ENCODE measurements at regions of chrX and their contacts with region 1.

Region 1: DNA sequence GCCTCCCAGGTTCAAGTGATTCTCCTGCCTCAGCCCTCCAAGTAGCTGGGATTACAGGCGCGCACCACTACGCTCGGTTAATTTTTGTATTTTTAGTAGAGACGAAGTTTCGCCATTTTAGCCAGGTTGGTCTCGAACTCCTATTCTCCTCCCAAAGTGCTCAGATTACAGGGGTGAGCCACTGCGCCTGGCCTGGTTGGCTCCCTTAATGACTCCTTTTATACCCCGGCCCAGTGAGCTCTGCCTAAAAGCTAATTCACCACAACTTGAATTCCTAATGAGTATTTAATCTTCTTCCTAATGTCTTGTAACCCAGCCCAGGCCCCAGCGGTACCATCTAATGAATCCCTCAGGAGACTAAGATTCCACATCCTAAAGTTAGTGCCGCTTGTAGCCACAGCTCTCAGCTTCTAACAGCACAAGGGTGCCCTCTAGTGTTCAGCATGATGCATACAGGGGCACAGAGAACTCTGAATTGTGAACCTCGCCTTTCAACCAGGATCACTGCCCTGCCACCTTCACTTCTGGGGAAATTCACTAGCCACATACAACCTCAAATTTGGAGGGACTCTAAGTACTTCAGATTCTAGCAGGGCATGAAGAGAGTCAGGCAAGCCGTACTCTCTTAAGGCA is 89.5 kb downstream of the OR13H1 start:
- DNase-seq: no peak
- ATAC-seq: peak; percentile 57 to 79 (median 75)
- H3K4me3 ChIP-seq: no peak overlapping the region
- H3K27ac ChIP-seq: no peak overlapping the region
- H3K4me1 ChIP-seq: no peaks in the 10 kb centered on the region
- H3K27me3 ChIP-seq: peaks cover 0 to 40% (median 0%) of the 10 kb centered on the region in 3 donors
- CTCF ChIP-seq: peak; percentile 81

Region 2: DNA sequence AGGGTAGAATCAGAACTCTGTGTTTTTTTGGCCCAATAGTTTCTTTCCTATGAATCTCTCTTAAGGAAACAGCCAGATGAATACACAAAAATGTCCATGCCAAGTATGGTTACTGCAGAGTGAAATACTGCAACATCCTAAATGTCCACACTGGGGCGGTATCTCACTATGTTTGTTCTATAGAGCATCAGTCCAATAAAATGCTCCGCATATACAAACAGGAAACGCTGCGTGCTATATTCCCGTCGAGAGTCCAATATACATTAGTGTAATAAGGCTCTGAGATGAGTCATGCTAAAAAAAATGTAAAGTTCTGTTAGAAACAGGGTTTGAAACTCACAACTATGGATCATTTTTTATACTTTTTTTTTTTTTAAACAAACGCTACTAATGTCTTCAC is 657.5 kb before region 1 on chrX:
- intact Hi-C with region 1: loop called (anchors 2 to 5 kb)
- DNase-seq: no peak
- ATAC-seq: peak; percentile 74 to 83 (median 80)
- H3K4me3 ChIP-seq: no peak overlapping the region
- H3K27ac ChIP-seq: no peak overlapping the region
- H3K4me1 ChIP-seq: no peaks in the 10 kb centered on the region
- H3K27me3 ChIP-seq: no peaks in the 10 kb centered on the region
- CTCF ChIP-seq: peak; percentile 75

Region 3: GRCh38 chrX:131068945-131069719 is 564.3 kb before region 1 on chrX:
- intact Hi-C with region 1: loop called in 1 of 2 experiments (anchors 10 kb)
- DNase-seq: no peak
- ATAC-seq: peak; percentile 49 to 70 (median 66)
- H3K4me3 ChIP-seq: no peak overlapping the region
- H3K27ac ChIP-seq: no peak overlapping the region
- H3K4me1 ChIP-seq: no peaks in the 10 kb centered on the region
- H3K27me3 ChIP-seq: peaks cover 0 to 83% (median 12%) of the 10 kb centered on the region in 3 donors
- CTCF ChIP-seq: peak; percentile 49

Region 4: DNA sequence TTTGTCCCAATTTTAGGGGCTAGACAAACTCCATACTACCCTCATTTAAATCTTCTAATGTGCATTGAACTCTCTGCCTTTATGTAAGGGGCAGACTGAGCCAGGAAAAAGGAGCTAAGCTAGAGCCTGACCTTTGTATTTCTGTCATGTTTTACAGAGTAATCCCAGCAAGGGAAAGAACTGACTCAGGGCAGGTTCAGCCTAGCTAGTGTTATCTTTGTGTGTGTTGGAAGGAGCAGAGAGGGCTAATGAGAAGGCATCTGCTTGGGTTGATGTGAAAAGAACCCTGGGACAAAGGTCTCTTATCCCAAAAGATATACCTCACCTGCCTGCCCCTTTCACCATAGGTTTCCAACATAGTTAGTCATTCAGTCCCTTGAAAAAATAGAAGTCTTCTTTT is 376.0 kb before region 1 on chrX:
- intact Hi-C with region 1: loop called in 1 of 2 experiments (anchors 5 kb)
- DNase-seq: no peak
- ATAC-seq: no peak
- H3K4me3 ChIP-seq: no peak overlapping the region
- H3K27ac ChIP-seq: no peak overlapping the region
- H3K4me1 ChIP-seq: no peaks in the 10 kb centered on the region
- H3K27me3 ChIP-seq: peaks cover 0 to 18% (median 0%) of the 10 kb centered on the region in 3 donors
- CTCF ChIP-seq: no peak

Region 5: GRCh38 chrX:131366407-131366806 is 267.0 kb before region 1 on chrX:
- intact Hi-C with region 1: loop called in 1 of 2 experiments (anchors 10 kb)
- DNase-seq: no peak
- ATAC-seq: no peak
- H3K4me3 ChIP-seq: no peak overlapping the region
- H3K27ac ChIP-seq: no peak overlapping the region
- H3K4me1 ChIP-seq: no peaks in the 10 kb centered on the region
- H3K27me3 ChIP-seq: peaks cover 0 to 22% (median 0%) of the 10 kb centered on the region in 3 donors
- CTCF ChIP-seq: peak; percentile 34

Region 6: DNA sequence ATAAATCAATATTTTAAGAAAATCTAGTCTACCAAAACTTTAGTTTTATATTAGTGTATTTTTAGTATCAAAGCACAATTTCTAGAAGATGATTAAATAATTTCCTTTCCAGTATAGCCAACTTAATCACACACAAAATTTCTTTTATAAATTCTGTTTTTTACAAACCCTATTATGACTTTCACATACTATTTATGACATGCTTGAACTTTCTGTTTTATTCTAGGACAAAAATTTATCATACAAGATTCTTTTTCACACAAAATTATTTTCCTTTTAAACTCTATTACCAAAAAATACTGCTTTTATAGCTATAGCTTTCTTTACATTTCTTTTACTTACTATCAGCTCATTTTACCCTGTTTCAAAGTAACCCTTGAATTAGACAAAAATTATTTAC is 60.0 kb after region 1 on chrX:
- intact Hi-C with region 1: no loop called
- DNase-seq: no peak
- ATAC-seq: no peak
- H3K4me3 ChIP-seq: no peak overlapping the region
- H3K27ac ChIP-seq: no peak overlapping the region
- H3K4me1 ChIP-seq: no peaks in the 10 kb centered on the region
- H3K27me3 ChIP-seq: peaks cover 0 to 3% (median 0%) of the 10 kb centered on the region in 3 donors
- CTCF ChIP-seq: no peak

Region 7: DNA sequence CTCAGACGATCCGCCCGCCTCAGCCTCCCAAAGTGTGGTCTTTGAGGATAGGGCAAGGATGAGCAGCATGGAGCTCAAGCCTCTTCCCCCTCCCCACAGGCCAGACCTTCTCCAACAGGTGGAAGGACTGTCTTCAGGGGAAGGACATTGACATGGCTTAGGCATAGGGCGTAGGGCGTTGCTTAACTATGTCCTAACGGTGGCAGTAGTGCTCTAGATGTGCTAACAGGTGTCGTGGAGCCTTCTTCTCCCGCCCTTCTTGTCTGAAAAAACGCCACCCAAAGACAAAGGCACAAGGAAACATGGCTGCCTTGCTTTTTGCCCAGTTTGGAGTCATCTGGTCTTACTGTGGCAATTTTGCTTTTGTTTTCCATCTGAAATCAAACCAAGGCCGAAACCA is 130.3 kb after region 1 on chrX:
- intact Hi-C with region 1: no loop called
- DNase-seq: peak; percentile 58 to 79
- ATAC-seq: peak; percentile 89 to 93 (median 92)
- H3K4me3 ChIP-seq: peak overlapping the region; percentile 68
- H3K27ac ChIP-seq: peak overlapping the region; percentile 60
- H3K4me1 ChIP-seq: no peaks in the 10 kb centered on the region
- H3K27me3 ChIP-seq: no peaks in the 10 kb centered on the region
- CTCF ChIP-seq: peak; percentile 61